CD4-positive, alpha-beta T cell (primary cell): ENCODE measurements at regions of chr13 and their contacts with region 1.

Region 1: GRCh38 chr13:99436686-99437416 is 64.4 kb upstream of the TM9SF2 start:
- DNase-seq: peak; percentile 91 to 98 (median 94)
- ATAC-seq: peak; percentile 52
- H3K4me3 ChIP-seq: peak overlapping the region; percentile 32
- H3K4me3 Mint-ChIP-seq: peak overlapping the region; percentile 47
- H3K27ac ChIP-seq: peak overlapping the region in 1 of 2 donors; percentile 11
- H3K27ac Mint-ChIP-seq: peak overlapping the region; percentile 84
- H3K4me1 ChIP-seq: peaks cover 57% of the 10 kb centered on the region
- H3K4me1 Mint-ChIP-seq: peaks cover 64% of the 10 kb centered on the region
- H3K27me3 ChIP-seq: no peaks in the 10 kb centered on the region
- H3K27me3 Mint-ChIP-seq: no peaks in the 10 kb centered on the region
- CTCF ChIP-seq: peak; percentile 100

Region 2: GRCh38 chr13:98918771-98919170 is 518.1 kb before region 1 on chr13:
- CTCF ChIA-PET with region 1: no interaction called
- POLR2A ChIA-PET with region 1: no interaction called
- intact Hi-C with region 1: no loop called
- DNase-seq: peak in 5 of 14 experiments; percentile 9 to 37 (median 20)
- ATAC-seq: peak; percentile 84
- H3K4me3 ChIP-seq: no peak overlapping the region
- H3K4me3 Mint-ChIP-seq: no peak overlapping the region
- H3K27ac ChIP-seq: no peak overlapping the region
- H3K27ac Mint-ChIP-seq: peak overlapping the region; percentile 5
- H3K4me1 ChIP-seq: peaks cover 14% of the 10 kb centered on the region
- H3K4me1 Mint-ChIP-seq: peaks cover 56% of the 10 kb centered on the region
- H3K27me3 ChIP-seq: no peaks in the 10 kb centered on the region
- H3K27me3 Mint-ChIP-seq: no peaks in the 10 kb centered on the region
- CTCF ChIP-seq: no peak

Region 3: GRCh38 chr13:99176309-99177276 is 260.3 kb before region 1 on chr13:
- CTCF ChIA-PET with region 1: interaction called, 4 read pairs
- POLR2A ChIA-PET with region 1: interaction called, 4 read pairs
- intact Hi-C with region 1: loop called in 1 of 2 experiments (anchors 1 kb)
- DNase-seq: peak; percentile 64 to 89 (median 74)
- ATAC-seq: peak; percentile 93
- H3K4me3 ChIP-seq: peak overlapping the region; percentile 16
- H3K4me3 Mint-ChIP-seq: peak overlapping the region; percentile 42
- H3K27ac ChIP-seq: no peak overlapping the region
- H3K27ac Mint-ChIP-seq: peak overlapping the region; percentile 76
- H3K4me1 ChIP-seq: peaks cover 41% of the 10 kb centered on the region
- H3K4me1 Mint-ChIP-seq: peaks cover 40% of the 10 kb centered on the region
- H3K27me3 ChIP-seq: no peaks in the 10 kb centered on the region
- H3K27me3 Mint-ChIP-seq: no peaks in the 10 kb centered on the region
- CTCF ChIP-seq: peak; percentile 94

Region 4: DNA sequence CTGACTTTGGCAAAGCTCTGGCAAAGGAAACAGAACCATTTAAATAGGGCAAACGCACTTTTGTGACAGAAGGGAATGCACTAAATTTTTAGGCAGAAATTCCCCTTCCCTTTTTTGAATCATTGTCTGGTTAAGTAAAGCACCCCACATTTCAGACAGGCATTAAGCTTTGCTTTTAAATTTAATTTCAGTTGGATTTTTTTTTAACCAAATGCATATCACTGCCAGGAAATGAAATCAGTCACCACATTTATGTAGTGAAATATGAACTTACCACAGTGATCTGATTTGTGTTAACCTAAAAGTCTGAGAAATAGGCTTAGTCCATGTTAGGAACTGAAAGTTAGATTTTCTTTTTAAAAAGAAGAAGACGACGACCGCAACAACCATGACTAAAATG is 140.5 kb before region 1 on chr13:
- CTCF ChIA-PET with region 1: interaction called, 32 read pairs
- POLR2A ChIA-PET with region 1: interaction called, 3 read pairs
- intact Hi-C with region 1: no loop called
- DNase-seq: peak in 3 of 14 experiments; percentile 63 to 74 (median 68)
- ATAC-seq: peak; percentile 60
- H3K4me3 ChIP-seq: peak overlapping the region; percentile 28
- H3K4me3 Mint-ChIP-seq: peak overlapping the region; percentile 86
- H3K27ac ChIP-seq: peak overlapping the region; percentile 39 to 78
- H3K27ac Mint-ChIP-seq: peak overlapping the region; percentile 100
- H3K4me1 ChIP-seq: peaks cover 43% of the 10 kb centered on the region
- H3K4me1 Mint-ChIP-seq: peaks cover 93% of the 10 kb centered on the region
- H3K27me3 ChIP-seq: no peaks in the 10 kb centered on the region
- H3K27me3 Mint-ChIP-seq: no peaks in the 10 kb centered on the region
- CTCF ChIP-seq: no peak

Region 5: DNA sequence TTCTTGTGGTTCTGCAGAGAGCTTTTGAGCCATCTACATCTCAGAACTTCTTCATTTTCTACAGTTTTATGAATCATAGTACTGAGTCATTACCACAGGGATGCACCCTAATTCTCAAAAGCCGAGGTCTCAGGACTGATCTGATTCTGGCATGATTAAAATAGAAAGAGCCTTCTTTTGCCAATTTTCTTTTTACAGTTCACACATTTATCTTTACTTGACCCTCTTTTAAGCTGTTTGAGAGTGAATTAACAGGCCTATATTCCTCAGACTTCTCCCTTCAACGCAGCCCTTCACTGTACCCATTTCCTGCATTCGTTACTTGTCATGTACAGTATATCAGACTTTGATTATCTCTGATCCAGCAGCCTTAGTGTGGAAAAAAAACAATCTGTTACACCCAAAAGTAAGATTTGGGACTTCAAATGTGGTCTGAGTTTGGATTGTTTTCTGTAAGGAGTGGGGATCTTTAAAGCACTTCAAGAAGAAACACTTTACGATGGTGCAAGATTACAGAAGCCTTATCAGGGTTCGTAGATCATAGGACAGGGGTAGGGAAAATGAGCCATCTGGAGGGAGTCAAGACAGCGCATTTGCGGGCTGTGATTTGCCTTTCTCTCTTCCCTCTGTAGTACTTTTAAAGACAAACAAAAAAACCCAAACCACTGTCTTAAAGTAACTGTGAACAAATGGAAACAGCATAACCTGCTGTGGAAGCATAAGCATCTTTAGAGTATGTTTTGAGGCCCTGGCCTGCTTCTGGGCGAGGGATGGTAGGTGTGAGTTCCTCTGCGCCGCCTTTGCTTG is 114.4 kb before region 1 on chr13:
- CTCF ChIA-PET with region 1: interaction called, 18 read pairs
- POLR2A ChIA-PET with region 1: no interaction called
- intact Hi-C with region 1: no loop called
- DNase-seq: peak in 7 of 14 experiments; percentile 16 to 84 (median 57)
- ATAC-seq: peak; percentile 72
- H3K4me3 ChIP-seq: peak overlapping the region; percentile 19
- H3K4me3 Mint-ChIP-seq: peak overlapping the region; percentile 59
- H3K27ac ChIP-seq: peak overlapping the region; percentile 69 to 80
- H3K27ac Mint-ChIP-seq: peak overlapping the region; percentile 93
- H3K4me1 ChIP-seq: peaks cover 58% of the 10 kb centered on the region
- H3K4me1 Mint-ChIP-seq: peaks cover 83% of the 10 kb centered on the region
- H3K27me3 ChIP-seq: no peaks in the 10 kb centered on the region
- H3K27me3 Mint-ChIP-seq: no peaks in the 10 kb centered on the region
- CTCF ChIP-seq: no peak

Region 6: DNA sequence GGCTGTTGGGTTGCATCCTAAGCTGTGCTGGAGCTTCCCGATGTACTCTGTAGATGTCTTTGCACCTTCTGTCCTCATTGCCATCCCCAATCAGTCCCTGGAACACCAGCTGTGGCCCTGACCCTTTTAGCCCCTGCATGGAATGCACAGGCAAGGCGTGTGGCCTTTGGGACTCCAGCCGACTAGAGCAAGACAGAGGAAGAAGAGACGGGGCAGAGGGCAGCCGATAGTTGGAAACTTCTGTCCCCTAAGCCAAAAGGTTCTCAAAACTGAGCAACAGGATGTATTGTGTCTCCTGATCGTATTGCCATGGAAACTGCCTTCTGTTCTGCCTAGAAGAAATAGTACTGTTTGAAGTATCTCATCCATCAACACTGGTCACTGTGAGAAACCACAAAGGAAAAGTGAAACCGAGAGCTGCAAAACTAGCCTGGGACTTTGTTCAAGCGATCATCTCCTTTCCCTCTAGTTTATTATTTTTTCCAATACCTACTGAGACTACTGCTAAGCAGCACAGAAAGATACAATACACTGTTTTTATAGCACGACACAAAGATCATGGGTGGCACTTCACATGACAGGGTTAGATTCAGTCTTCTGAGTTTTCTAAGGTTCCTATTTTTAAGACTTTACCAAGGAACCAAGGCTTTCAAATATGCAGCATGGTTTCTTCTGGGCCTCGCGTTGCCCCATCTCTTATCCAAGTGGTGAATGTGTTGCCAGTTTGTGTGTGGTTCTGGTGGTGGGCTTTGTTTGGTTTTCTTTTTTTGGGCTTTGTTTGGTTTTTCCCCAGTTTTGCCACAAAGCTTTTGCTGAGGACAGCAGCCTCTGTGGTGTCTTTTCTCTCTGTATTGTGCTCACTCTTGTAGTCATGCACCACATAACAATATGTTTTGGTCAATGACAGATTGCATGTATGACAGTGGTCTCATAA is 80.4 kb before region 1 on chr13:
- CTCF ChIA-PET with region 1: interaction called, 20 read pairs
- POLR2A ChIA-PET with region 1: interaction called, 7 read pairs
- intact Hi-C with region 1: loop called in 1 of 2 experiments (anchors 1 kb)
- DNase-seq: peak in 12 of 14 experiments; percentile 42 to 97 (median 56)
- ATAC-seq: peak; percentile 54
- H3K4me3 ChIP-seq: peak overlapping the region; percentile 19
- H3K4me3 Mint-ChIP-seq: peak overlapping the region; percentile 49
- H3K27ac ChIP-seq: peak overlapping the region; percentile 93 to 97
- H3K27ac Mint-ChIP-seq: peak overlapping the region; percentile 97
- H3K4me1 ChIP-seq: peaks cover 95% of the 10 kb centered on the region
- H3K4me1 Mint-ChIP-seq: peaks cover 100% of the 10 kb centered on the region
- H3K27me3 ChIP-seq: no peaks in the 10 kb centered on the region
- H3K27me3 Mint-ChIP-seq: no peaks in the 10 kb centered on the region
- CTCF ChIP-seq: no peak

Region 7: DNA sequence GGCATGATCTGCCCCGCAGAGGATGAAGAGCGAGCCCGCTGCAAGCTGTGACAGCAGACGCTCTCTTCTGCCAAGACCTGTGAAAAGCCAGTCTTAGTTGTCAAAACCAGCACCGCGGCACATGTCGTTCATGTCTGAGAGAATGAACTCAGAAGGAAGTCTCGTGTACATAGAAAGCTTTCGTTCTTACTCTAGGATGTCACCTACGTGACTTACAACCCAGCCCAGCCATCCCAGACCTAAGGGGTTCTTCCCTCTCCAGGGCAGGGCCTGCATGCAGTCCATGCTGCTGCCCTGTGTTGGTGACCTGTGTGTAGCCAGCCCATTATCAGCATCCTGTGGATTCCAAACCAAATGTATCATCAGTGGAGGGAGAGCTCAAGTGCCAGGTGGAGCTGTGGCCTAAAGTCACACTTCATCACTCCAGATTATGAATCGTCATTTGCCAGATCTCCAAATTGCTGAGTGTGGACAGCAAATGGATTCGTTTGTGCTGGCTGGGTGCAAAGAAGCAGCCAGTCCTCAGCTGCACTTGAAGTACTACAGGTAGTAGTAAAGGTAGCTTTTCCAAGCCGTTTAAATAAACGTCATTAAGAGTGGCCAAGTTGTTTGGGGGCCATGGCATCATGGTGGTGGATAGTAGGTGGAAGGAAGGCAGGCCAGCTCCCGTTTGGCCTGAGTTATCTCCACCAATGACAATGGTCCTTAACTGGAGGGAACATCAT is 55.8 kb before region 1 on chr13:
- CTCF ChIA-PET with region 1: interaction called, 77 read pairs
- POLR2A ChIA-PET with region 1: interaction called, 15 read pairs
- intact Hi-C with region 1: no loop called
- DNase-seq: peak in 13 of 14 experiments; percentile 42 to 77 (median 57)
- ATAC-seq: peak; percentile 40
- H3K4me3 ChIP-seq: no peak overlapping the region
- H3K4me3 Mint-ChIP-seq: peak overlapping the region; percentile 65
- H3K27ac ChIP-seq: peak overlapping the region; percentile 65 to 87
- H3K27ac Mint-ChIP-seq: peak overlapping the region; percentile 88
- H3K4me1 ChIP-seq: peaks cover 89% of the 10 kb centered on the region
- H3K4me1 Mint-ChIP-seq: peaks cover 95% of the 10 kb centered on the region
- H3K27me3 ChIP-seq: no peaks in the 10 kb centered on the region
- H3K27me3 Mint-ChIP-seq: no peaks in the 10 kb centered on the region
- CTCF ChIP-seq: no peak

Region 8: GRCh38 chr13:99417201-99418102 is 19.4 kb before region 1 on chr13:
- CTCF ChIA-PET with region 1: interaction called, 88 read pairs
- POLR2A ChIA-PET with region 1: interaction called, 57 read pairs
- intact Hi-C with region 1: loop called (anchors 1 to 2 kb)
- DNase-seq: peak in 6 of 14 experiments; percentile 41 to 66 (median 52)
- ATAC-seq: peak; percentile 30
- H3K4me3 ChIP-seq: peak overlapping the region; percentile 52
- H3K4me3 Mint-ChIP-seq: no peak overlapping the region
- H3K27ac ChIP-seq: peak overlapping the region; percentile 59 to 76
- H3K27ac Mint-ChIP-seq: no peak overlapping the region
- H3K4me1 ChIP-seq: peaks cover 88% of the 10 kb centered on the region
- H3K4me1 Mint-ChIP-seq: peaks cover 62% of the 10 kb centered on the region
- H3K27me3 ChIP-seq: no peaks in the 10 kb centered on the region
- H3K27me3 Mint-ChIP-seq: no peaks in the 10 kb centered on the region
- CTCF ChIP-seq: no peak